Posterior cingulate gyrus (tissue), 11 donors: ENCODE measurements at regions of chr11 and their contacts with region 1.

Region 1: DNA sequence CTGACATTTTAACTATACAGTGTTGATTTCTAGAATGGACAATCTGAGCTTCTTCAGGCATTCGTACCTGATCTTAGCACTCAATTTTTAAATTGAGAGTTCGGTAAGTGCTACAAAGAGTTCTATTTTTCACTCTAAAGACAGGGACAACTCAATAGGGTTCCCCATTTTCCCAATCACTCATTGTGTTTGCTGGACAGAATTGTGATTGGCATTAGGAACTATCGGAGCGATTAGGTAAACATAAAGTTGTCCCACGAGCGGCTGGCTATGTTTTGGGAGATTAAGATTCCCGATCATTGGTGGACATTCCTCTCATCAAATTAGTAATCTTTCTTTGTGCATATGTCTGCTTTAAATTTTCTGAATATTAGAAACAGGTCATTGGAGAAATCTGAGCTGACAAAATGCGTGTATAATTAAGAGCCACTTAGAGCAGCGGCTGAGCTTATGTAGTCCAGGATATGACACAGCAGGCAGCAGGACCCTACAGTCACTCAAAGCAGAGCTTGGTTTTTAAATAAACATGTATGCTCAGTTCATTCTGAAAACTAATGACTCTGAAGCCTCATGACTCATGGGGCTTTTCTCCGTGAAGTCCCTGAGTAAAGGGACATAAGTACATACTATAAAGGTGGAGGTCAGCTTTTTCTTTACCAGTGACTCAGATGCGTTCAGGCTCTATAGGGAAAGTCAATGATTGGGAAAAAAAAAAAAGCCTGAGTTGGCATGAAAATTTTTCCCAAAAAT is 109.4 kb downstream of the GRIA4 start:
- DNase-seq: no peak

Region 2: DNA sequence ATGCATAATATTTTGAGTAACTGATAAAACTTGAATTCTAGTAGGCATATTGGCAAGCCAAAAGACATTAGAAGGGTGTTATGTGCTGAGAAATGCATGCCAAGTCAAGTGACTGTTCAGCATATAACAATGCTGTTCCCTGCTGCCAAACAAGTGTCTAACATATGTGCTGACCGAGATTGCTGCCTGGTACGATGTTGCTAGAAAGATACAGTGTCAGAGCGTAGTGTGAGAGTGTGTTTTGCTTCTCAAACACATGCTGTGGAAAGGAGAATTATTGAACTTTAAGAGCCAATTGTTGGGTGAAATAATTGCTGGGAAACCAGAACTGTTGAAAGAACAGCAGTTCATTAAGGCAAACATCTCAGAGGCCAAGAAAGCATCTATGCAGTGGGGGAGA is 180.7 kb before region 1 on chr11:
- intact Hi-C with region 1: no loop called
- DNase-seq: no peak

Region 3: GRCh38 chr11:105609341-105609781 is 109.9 kb before region 1 on chr11:
- intact Hi-C with region 1: loop called (anchors 10 kb)
- DNase-seq: peak in 8 of 10 donors; percentile 25 to 90 (median 50)